ENCODE measurements at regions of chr11 and their contacts with region 1.

Region 1: DNA sequence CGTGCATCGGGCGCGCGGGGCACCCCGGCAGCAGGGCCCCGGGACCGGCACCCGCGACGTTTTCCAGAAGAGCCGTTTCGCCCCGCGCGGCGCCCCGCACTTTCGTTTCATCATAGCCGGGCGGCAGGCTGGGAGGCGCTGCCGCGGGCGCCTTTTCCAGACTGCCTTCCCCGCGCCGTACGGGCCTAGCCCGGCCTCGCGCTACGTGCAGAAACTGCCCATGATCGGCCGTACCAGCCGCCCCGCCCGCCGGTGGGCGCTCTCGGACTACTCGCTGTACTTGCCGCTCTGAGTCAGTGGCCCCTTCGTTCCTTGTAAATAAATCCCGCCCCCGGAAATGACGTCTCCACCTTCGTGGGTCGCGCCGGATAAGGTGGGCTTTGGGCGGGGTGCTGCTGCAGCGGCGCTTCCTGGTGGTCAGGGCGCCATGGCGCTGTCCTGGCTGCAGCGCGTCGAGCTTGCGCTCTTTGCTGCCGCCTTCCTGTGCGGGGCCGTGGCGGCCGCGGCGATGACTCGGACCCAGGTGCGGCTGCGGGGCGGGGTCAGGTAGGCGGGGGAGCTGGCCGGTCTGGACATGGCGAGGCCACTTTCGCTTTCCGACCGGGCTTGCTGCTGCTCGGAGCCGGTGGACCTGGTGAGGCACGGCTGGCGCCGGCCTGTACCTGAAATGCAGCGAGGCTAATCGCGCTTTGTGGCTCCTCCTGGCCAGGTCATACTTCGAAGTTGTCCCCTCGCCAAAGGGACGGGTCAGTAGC is at the start of gene TMEM179B:
- DNase-seq: peak; percentile 99
- ATAC-seq: peak; percentile 90 to 92
- total RNA-seq, gene TMEM179B: 20.6 to 22.4 TPM

Region 2: GRCh38 chr11:62831520-62832335 is 44.5 kb after region 1 on chr11 and contains the start of gene STX5:
- intact Hi-C with region 1: loop called in 1 of 2 experiments (anchors 5 kb)
- DNase-seq: peak; percentile 99
- ATAC-seq: peak; percentile 98
- total RNA-seq, gene STX5: 22.1 to 23.2 TPM

Region 3: DNA sequence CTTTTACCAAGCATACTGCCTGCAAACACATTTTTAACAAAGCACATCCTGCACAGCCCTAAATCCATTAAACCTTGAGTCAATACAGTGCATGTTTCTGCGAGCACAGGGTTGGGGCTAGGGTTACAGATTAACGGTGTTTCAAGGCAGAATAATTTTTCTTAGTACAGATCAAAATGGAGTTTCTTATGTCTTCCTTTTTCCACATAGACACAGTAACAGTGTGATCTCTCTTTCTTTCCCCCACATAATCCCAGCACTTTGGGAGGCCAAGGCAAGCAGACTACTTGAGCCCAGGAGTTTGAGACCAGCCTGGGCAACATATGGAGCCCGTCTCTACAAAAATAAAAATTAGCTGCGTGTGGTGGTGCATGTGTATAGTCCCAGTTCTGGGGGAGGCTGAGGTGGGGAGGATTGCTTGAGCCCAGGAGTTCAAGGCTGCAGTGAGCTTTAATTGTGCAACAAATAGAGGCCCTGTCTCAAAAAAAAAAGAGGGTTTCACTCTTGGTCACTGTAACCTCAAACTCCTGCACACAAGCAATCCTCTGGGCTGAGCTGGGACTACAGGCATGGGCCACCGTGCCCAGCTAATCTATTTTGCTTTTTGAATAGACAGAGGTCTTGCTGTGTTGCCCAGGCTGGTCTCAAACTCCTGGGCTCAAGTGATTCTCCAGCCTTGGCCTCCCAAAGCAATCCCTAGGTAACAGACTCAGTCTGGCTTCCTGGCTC is 73.8 kb after region 1 on chr11:
- intact Hi-C with region 1: loop called (anchors 2 to 5 kb)
- DNase-seq: no peak
- ATAC-seq: no peak

Region 4: GRCh38 chr11:63710476-63711217 is 923.5 kb after region 1 on chr11:
- intact Hi-C with region 1: no loop called
- DNase-seq: no peak
- ATAC-seq: peak; percentile 84 to 86